Activated CD8-positive, alpha-beta T cell treated with anti-CD3 and anti-CD28 coated beads for 36 hours (primary cell): ENCODE measurements at regions of chr21 and their contacts with region 1.

Region 1: GRCh38 chr21:39137248-39138178 is 45.7 kb downstream of the PSMG1 start:
- DNase-seq: peak; percentile 15
- ATAC-seq: peak; percentile 42
- H3K4me3 Mint-ChIP-seq: no peak overlapping the region
- H3K27ac Mint-ChIP-seq: no peak overlapping the region
- H3K4me1 Mint-ChIP-seq: no peaks in the 10 kb centered on the region
- H3K27me3 Mint-ChIP-seq: no peaks in the 10 kb centered on the region
- CTCF ChIP-seq: no peak

Region 2: DNA sequence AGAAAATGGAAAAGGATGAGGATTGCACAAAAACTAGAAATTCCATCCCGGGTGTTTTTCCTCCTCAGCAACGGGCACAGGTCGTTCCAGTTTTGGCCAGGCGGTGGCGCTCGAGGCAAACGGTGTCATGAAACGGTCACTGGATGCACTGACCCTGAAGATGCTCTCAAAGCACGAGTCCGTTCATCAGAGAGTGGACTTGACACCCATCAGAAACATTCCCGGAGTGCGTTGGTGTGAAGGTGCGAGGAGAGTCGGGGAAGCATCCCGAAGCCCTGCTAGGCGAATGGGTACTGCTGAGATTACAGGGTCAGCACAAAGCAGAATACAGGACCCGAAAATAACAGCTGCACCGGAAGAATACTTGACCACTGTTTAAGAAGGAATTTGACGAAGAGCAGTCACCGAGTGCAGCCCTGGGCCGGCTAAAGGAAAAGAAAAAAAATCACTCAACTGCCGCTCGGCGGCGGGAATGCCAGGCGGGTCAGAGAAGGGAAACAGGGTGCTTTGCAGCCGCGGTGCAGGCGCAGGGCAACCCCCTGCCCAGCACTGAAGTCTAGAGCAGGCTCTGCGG is 403.5 kb before region 1 on chr21:
- CTCF ChIA-PET with region 1: interaction called, 3 read pairs
- POLR2A ChIA-PET with region 1: no interaction called
- intact Hi-C with region 1: loop called (anchors 5 kb)
- DNase-seq: peak; percentile 79
- ATAC-seq: peak; percentile 71
- H3K4me3 Mint-ChIP-seq: peak overlapping the region; percentile 58
- H3K27ac Mint-ChIP-seq: no peak overlapping the region
- H3K4me1 Mint-ChIP-seq: peaks cover 12% of the 10 kb centered on the region
- H3K27me3 Mint-ChIP-seq: peaks cover 27% of the 10 kb centered on the region
- CTCF ChIP-seq: peak; percentile 97